ENCODE measurements at regions of chr5 and their contacts with region 1.

Region 1: DNA sequence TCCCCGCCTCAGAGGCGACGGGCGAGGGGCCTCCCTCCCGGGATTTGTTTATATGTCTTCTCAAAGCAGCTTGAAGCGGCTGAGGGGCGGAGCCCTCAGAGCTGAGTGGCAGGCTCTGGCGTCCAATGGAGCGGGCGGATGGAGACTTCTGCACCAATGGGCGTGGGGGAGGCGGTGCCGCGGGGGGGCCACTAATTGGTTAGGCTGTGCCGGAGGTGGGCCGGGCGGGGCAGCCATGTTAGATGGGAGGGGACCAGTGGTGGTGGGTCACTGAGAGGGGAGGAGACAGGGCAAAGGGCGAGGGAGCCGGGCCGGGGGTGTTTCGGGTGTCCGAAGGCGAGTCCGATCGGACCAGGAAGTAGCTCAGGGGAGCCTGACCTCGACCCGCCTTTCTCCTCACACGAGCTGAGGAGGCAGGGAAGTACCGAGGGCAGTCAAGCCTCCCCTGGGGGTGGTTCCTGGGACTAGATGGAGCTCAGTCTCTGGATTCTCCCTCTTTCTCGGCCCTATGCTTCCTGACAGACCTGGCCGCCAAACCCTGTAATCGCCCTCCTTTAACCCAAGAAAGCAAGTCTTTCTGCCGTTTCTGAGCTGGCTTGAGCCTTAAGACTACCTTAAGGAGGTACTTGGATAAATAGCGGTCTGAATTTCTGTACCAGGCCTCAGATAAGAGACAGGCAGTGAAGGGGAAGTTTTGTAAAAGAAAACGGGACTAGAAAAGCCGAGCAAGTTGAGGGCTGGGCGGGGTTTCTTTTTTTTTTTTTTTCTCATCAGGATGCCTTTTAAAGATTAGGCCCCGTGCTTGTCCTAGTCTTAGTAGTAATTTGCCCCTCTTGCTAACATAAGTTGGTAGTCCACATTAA is 1.1 kb downstream of the CREBRF start:
- DNase-seq: peak; percentile 99
- ATAC-seq: peak; percentile 81
- H3K4me3 ChIP-seq: peak overlapping the region; percentile 81 to 97 (median 89)
- H3K4me3 Mint-ChIP-seq: peak overlapping the region; percentile 96
- H3K27ac ChIP-seq: peak overlapping the region; percentile 82 to 100
- H3K27ac Mint-ChIP-seq: peak overlapping the region; percentile 96
- H3K4me1 ChIP-seq: peaks cover 19 to 26% of the 10 kb centered on the region in 2 donors
- H3K4me1 Mint-ChIP-seq: peaks cover 47% of the 10 kb centered on the region
- H3K27me3 ChIP-seq: no peaks in the 10 kb centered on the region
- H3K27me3 Mint-ChIP-seq: no peaks in the 10 kb centered on the region
- CTCF ChIP-seq: no peak

Region 2: GRCh38 chr5:172006321-172007174 is 1050.7 kb before region 1 on chr5 and contains the start of gene FBXW11:
- CTCF ChIA-PET with region 1: no interaction called
- POLR2A ChIA-PET with region 1: no interaction called
- intact Hi-C with region 1: loop called (anchors 5 kb)
- DNase-seq: peak; percentile 97
- ATAC-seq: peak; percentile 85
- H3K4me3 ChIP-seq: peak within 1 kb of the TSS; percentile 77 to 94 (median 90)
- H3K4me3 Mint-ChIP-seq: peak within 1 kb of the TSS; percentile 92
- H3K27ac ChIP-seq: peak within 1 kb of the TSS; percentile 96 to 97
- H3K27ac Mint-ChIP-seq: peak within 1 kb of the TSS; percentile 93
- H3K4me1 ChIP-seq: peaks cover 44 to 47% of the 10 kb centered on the region in 2 donors
- H3K4me1 Mint-ChIP-seq: peaks cover 49% of the 10 kb centered on the region
- H3K27me3 ChIP-seq: no peaks in the 10 kb centered on the region
- H3K27me3 Mint-ChIP-seq: no peaks in the 10 kb centered on the region
- CTCF ChIP-seq: no peak
- total RNA-seq, gene FBXW11: 62.4 and 64.8 TPM in 2 replicates

Region 3: DNA sequence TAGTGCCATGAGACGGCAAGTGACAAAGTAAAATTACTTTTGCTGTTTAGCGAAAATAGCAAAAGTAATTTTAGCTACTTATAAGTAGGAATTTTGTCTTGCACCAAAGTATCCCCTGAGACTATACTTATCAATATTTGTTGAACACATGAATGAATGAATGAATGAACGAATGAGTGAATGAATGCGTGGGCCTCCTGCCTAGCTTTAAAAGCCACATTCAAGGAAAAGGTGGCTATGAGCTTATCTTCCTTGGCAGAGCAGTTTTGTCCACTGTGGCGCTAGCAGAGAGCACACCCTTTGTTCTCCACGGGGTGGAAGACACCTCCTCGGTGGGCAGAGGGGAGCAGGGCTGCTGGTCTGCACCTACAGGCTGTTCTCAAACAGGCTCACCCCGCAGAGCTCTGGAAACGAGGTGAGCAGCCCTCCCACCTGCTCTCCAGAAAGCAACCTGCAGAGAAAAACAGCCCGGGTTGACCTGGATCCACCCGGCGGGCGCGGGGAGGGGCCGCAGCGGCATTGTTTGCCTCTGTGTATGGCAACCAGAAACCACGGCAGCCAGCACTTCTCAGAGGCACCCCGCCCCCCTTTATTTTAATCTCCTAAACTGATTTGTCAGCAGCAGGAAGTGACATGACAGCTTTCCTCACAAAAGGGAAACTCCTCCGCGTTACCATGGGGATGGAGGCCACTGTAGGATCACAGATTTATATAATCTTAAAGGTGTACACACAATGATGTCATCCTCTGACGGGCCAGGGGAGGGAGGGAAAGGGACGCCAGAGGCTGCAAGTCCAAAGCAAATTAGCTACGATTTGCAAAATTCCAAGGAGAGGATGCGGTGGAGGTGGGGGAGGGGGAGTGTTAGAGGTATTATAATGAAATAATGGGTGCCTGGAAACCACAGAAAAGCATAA is 292.2 kb before region 1 on chr5:
- CTCF ChIA-PET with region 1: no interaction called
- POLR2A ChIA-PET with region 1: interaction called, 3 read pairs
- intact Hi-C with region 1: loop called (anchors 2 kb)
- DNase-seq: peak; percentile 99
- ATAC-seq: peak; percentile 78
- H3K4me3 ChIP-seq: peak overlapping the region; percentile 27 to 74 (median 52)
- H3K4me3 Mint-ChIP-seq: peak overlapping the region; percentile 83
- H3K27ac ChIP-seq: peak overlapping the region; percentile 92 to 94
- H3K27ac Mint-ChIP-seq: peak overlapping the region; percentile 94
- H3K4me1 ChIP-seq: peaks cover 33 to 42% of the 10 kb centered on the region in 2 donors
- H3K4me1 Mint-ChIP-seq: peaks cover 59% of the 10 kb centered on the region
- H3K27me3 ChIP-seq: no peaks in the 10 kb centered on the region
- H3K27me3 Mint-ChIP-seq: no peaks in the 10 kb centered on the region
- CTCF ChIP-seq: no peak

Region 4: GRCh38 chr5:172958331-172959046 is 98.8 kb before region 1 on chr5:
- CTCF ChIA-PET with region 1: interaction called, 6 read pairs
- POLR2A ChIA-PET with region 1: interaction called, 4 read pairs
- intact Hi-C with region 1: loop called (anchors 1 kb)
- DNase-seq: peak; percentile 82
- ATAC-seq: peak; percentile 73
- H3K4me3 ChIP-seq: peak overlapping the region; percentile 44 to 97 (median 85)
- H3K4me3 Mint-ChIP-seq: peak overlapping the region; percentile 97
- H3K27ac ChIP-seq: peak overlapping the region; percentile 54 to 81
- H3K27ac Mint-ChIP-seq: peak overlapping the region; percentile 96
- H3K4me1 ChIP-seq: peaks cover 8 to 18% of the 10 kb centered on the region in 2 donors
- H3K4me1 Mint-ChIP-seq: peaks cover 23% of the 10 kb centered on the region
- H3K27me3 ChIP-seq: no peaks in the 10 kb centered on the region
- H3K27me3 Mint-ChIP-seq: no peaks in the 10 kb centered on the region
- CTCF ChIP-seq: no peak

Region 5: GRCh38 chr5:173010547-173011464 is 46.5 kb before region 1 on chr5:
- CTCF ChIA-PET with region 1: interaction called, 3 read pairs
- POLR2A ChIA-PET with region 1: no interaction called
- intact Hi-C with region 1: loop called (anchors 2 kb)
- DNase-seq: no peak
- ATAC-seq: no peak
- H3K4me3 ChIP-seq: no peak overlapping the region
- H3K4me3 Mint-ChIP-seq: no peak overlapping the region
- H3K27ac ChIP-seq: no peak overlapping the region
- H3K27ac Mint-ChIP-seq: peak overlapping the region; percentile 58
- H3K4me1 ChIP-seq: peaks cover 3 to 14% of the 10 kb centered on the region in 2 donors
- H3K4me1 Mint-ChIP-seq: peaks cover 49% of the 10 kb centered on the region
- H3K27me3 ChIP-seq: no peaks in the 10 kb centered on the region
- H3K27me3 Mint-ChIP-seq: no peaks in the 10 kb centered on the region
- CTCF ChIP-seq: no peak

Region 6: GRCh38 chr5:173035904-173036707 is 21.2 kb before region 1 on chr5:
- CTCF ChIA-PET with region 1: interaction called, 6 read pairs
- POLR2A ChIA-PET with region 1: interaction called, 8 read pairs
- intact Hi-C with region 1: loop called (anchors 1 kb)
- DNase-seq: peak; percentile 48
- ATAC-seq: peak; percentile 8
- H3K4me3 ChIP-seq: peak overlapping the region in 4 of 5 experiments; percentile 38 to 75 (median 57)
- H3K4me3 Mint-ChIP-seq: peak overlapping the region; percentile 93
- H3K27ac ChIP-seq: peak overlapping the region; percentile 77 to 81
- H3K27ac Mint-ChIP-seq: peak overlapping the region; percentile 93
- H3K4me1 ChIP-seq: peaks cover 27 to 35% of the 10 kb centered on the region in 2 donors
- H3K4me1 Mint-ChIP-seq: peaks cover 57% of the 10 kb centered on the region
- H3K27me3 ChIP-seq: no peaks in the 10 kb centered on the region
- H3K27me3 Mint-ChIP-seq: no peaks in the 10 kb centered on the region
- CTCF ChIP-seq: no peak

Region 7: DNA sequence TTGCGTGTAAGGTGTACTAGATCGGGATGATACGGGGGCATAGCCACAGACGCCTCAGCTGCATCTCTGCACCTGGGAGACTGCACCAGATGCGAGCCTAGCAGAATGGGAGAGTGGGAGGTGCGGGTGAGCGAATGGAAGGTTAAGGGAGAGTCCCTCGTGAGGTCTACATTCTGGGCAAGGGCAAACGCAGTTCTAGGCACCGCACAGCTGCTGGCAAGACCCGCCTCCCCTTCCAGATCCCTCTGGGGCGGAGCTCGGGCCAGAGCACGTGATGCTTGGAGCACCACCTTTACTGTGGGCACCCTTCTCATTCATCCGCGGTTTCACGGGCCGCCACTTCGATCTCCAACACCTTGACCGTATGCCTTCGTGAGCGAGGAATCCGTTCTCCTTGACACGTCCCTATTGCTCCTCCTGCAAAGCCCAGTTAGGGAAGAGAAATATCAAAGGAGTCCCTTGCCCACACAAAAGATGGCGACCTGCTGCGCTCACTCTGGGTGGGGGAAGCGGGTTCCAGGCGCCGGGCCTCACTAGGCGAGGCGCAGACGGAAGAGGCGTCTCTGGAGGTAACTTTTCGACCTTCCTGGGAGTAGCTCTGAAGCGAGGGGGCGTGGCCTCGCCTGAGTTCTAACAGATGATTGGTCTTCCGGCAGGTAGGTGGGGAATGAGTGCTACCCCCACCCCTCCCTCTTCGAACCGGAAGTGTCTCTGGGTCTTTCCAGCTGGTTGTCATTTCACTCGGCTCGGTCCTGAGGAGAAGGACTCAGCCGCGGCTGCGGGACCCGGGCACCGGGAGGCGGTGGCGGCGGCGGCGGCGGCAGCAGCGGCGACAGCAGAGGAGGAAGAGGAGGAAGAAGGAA is 830.5 kb after region 1 on chr5 and contains the start of gene CPEB4:
- CTCF ChIA-PET with region 1: no interaction called
- POLR2A ChIA-PET with region 1: no interaction called
- intact Hi-C with region 1: loop called (anchors 5 kb)
- DNase-seq: peak; percentile 99
- ATAC-seq: peak; percentile 89
- H3K4me3 ChIP-seq: peak within 1 kb of the TSS; percentile 75 to 96 (median 88)
- H3K4me3 Mint-ChIP-seq: peak within 1 kb of the TSS; percentile 95
- H3K27ac ChIP-seq: peak within 1 kb of the TSS; percentile 84 to 92
- H3K27ac Mint-ChIP-seq: peak within 1 kb of the TSS; percentile 99
- H3K4me1 ChIP-seq: peaks cover 62 to 66% of the 10 kb centered on the region in 2 donors
- H3K4me1 Mint-ChIP-seq: peaks cover 87% of the 10 kb centered on the region
- H3K27me3 ChIP-seq: no peaks in the 10 kb centered on the region
- H3K27me3 Mint-ChIP-seq: no peaks in the 10 kb centered on the region
- CTCF ChIP-seq: no peak
- total RNA-seq, gene CPEB4: 26.0 and 28.2 TPM in 2 replicates

Measured in B cell (primary cell).